B cell (primary cell): ENCODE measurements at regions of chr22 and their contacts with region 1.

Region 1: GRCh38 chr22:20531315-20532201 is 24.1 kb downstream of the MED15 start:
- DNase-seq: no peak
- ATAC-seq: no peak
- H3K4me3 ChIP-seq: no peak overlapping the region
- H3K4me3 Mint-ChIP-seq: no peak overlapping the region
- H3K27ac ChIP-seq: no peak overlapping the region
- H3K27ac Mint-ChIP-seq: no peak overlapping the region
- H3K4me1 ChIP-seq: no peaks in the 10 kb centered on the region
- H3K4me1 Mint-ChIP-seq: peaks cover 16% of the 10 kb centered on the region
- H3K27me3 ChIP-seq: no peaks in the 10 kb centered on the region
- H3K27me3 Mint-ChIP-seq: no peaks in the 10 kb centered on the region
- CTCF ChIP-seq: no peak

Region 2: GRCh38 chr22:20405931-20406685 is 125.5 kb before region 1 on chr22:
- CTCF ChIA-PET with region 1: no interaction called
- POLR2A ChIA-PET with region 1: interaction called, 10 read pairs
- intact Hi-C with region 1: no loop called
- DNase-seq: no peak
- ATAC-seq: no peak
- H3K4me3 ChIP-seq: no peak overlapping the region
- H3K4me3 Mint-ChIP-seq: no peak overlapping the region
- H3K27ac ChIP-seq: no peak overlapping the region
- H3K27ac Mint-ChIP-seq: no peak overlapping the region
- H3K4me1 ChIP-seq: peaks cover 0 to 3% of the 10 kb centered on the region in 2 donors
- H3K4me1 Mint-ChIP-seq: no peaks in the 10 kb centered on the region
- H3K27me3 ChIP-seq: no peaks in the 10 kb centered on the region
- H3K27me3 Mint-ChIP-seq: no peaks in the 10 kb centered on the region
- CTCF ChIP-seq: no peak